CD8-positive, alpha-beta T cell (primary cell): ENCODE measurements at regions of chr3 and their contacts with region 1.

Region 1: GRCh38 chr3:4493014-4493940 is at the start of gene ITPR1:
- DNase-seq: peak; percentile 96 to 99 (median 98)
- ATAC-seq: peak; percentile 84
- H3K4me3 ChIP-seq: peak within 1 kb of the TSS; percentile 94 to 97
- H3K4me3 Mint-ChIP-seq: peak within 1 kb of the TSS; percentile 93
- H3K27ac ChIP-seq: peak within 1 kb of the TSS; percentile 70 to 75
- H3K27ac Mint-ChIP-seq: peak within 1 kb of the TSS; percentile 87
- H3K4me1 ChIP-seq: peaks cover 24% of the 10 kb centered on the region
- H3K4me1 Mint-ChIP-seq: peaks cover 48% of the 10 kb centered on the region
- H3K27me3 ChIP-seq: no peaks in the 10 kb centered on the region
- H3K27me3 Mint-ChIP-seq: no peaks in the 10 kb centered on the region
- CTCF ChIP-seq: no peak
- total RNA-seq, gene ITPR1: 57.5 to 62.3 TPM

Region 2: DNA sequence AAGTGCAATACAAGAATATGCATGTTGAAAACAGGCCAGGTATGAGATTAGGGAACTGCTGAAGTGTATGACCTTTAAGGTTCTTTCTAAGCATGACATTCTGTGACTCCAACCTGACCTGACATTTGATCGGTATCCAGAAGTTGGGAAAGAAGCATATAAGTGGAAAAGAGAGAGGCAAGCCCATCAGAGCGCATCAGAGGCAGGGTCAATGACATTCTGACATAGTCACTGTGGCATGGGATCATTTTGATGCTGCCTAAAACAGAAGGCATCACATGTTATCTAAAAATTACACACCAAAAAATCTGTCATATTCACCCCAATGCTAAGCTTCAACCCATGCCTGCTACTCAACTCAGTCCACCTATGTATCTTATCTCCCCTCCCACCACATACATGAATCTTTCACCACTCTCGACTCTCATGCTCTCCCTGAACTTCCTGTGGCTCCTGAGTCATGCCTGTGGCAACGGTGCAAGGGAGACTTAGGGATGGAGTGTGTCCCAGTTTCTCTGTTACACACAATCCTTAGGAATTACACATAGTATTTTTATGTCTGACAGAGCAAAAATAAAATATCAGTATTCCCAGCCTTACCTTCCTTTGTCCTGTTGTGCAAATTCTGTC is 714.5 kb before region 1 on chr3:
- CTCF ChIA-PET with region 1: no interaction called
- POLR2A ChIA-PET with region 1: no interaction called
- intact Hi-C with region 1: no loop called
- DNase-seq: no peak
- ATAC-seq: no peak
- H3K4me3 ChIP-seq: no peak overlapping the region
- H3K4me3 Mint-ChIP-seq: no peak overlapping the region
- H3K27ac ChIP-seq: no peak overlapping the region
- H3K27ac Mint-ChIP-seq: no peak overlapping the region
- H3K4me1 ChIP-seq: no peaks in the 10 kb centered on the region
- H3K4me1 Mint-ChIP-seq: no peaks in the 10 kb centered on the region
- H3K27me3 ChIP-seq: no peaks in the 10 kb centered on the region
- H3K27me3 Mint-ChIP-seq: no peaks in the 10 kb centered on the region
- CTCF ChIP-seq: no peak

Region 3: DNA sequence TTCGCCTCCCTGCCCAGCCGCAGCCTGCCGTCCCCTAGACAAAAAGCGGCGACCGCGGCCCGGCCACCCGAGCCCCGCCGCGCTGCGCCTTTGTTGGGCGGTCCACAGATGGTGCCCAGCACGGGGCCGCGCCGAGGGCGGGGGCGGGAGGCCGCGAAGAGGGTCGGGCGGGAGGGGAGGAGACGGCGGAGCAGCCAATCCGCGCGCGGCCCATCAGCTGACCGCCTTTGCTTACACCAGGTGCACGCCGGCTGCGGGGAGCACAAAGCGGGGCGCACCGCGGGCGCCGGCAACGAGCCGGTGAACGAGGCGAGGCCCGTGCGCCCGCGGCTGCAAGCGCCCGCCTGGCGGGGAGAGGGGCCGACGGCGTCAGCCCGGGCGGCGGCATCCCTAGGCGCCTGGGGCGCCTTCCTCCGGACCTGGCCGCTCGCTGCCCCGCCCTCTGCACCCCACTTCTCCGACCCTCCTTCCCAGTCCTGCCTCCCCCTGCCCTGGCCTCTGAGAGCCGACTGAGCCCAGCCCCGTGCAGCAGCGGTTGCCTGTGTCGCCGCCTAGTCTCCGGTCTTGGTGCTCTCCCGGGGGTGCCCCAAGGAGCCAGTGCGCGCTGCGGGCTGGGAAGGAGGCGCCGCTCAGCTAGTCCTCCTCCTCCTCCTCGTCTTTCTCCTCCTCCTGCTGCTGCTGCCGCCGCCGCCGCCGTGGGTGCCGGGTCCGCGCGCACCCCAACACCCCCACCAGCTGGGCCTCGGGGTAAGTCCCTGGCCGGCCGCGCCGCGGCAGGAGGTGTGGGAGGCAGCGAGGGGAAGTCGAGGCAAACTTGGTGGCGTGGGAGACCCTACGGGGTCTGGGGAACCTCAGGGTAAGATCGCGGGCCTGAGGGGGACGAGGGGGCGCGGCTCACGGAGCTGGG is 693.9 kb before region 1 on chr3 and contains the start of gene LRRN1:
- CTCF ChIA-PET with region 1: no interaction called
- POLR2A ChIA-PET with region 1: interaction called, 4 read pairs
- intact Hi-C with region 1: loop called in 1 of 2 experiments (anchors 10 kb)
- DNase-seq: peak; percentile 12 to 80 (median 57)
- ATAC-seq: peak; percentile 65
- H3K4me3 ChIP-seq: peak within 1 kb of the TSS; percentile 52 to 81
- H3K4me3 Mint-ChIP-seq: peak within 1 kb of the TSS; percentile 94
- H3K27ac ChIP-seq: peak within 1 kb of the TSS; percentile 62 to 76
- H3K27ac Mint-ChIP-seq: peak within 1 kb of the TSS; percentile 94
- H3K4me1 ChIP-seq: peaks cover 5% of the 10 kb centered on the region
- H3K4me1 Mint-ChIP-seq: peaks cover 25% of the 10 kb centered on the region
- H3K27me3 ChIP-seq: peaks cover 0 to 4% of the 10 kb centered on the region in 2 experiments
- H3K27me3 Mint-ChIP-seq: peaks cover 4% of the 10 kb centered on the region
- CTCF ChIP-seq: no peak
- total RNA-seq, gene LRRN1: 1.0 to 1.2 TPM

Region 4: GRCh38 chr3:4466741-4467521 is 26.3 kb before region 1 on chr3 and contains the start of gene SUMF1:
- CTCF ChIA-PET with region 1: interaction called, 4 read pairs
- POLR2A ChIA-PET with region 1: interaction called, 42 read pairs
- intact Hi-C with region 1: loop called (anchors 1 kb)
- DNase-seq: peak; percentile 34 to 85 (median 73)
- ATAC-seq: peak; percentile 93
- H3K4me3 ChIP-seq: peak within 1 kb of the TSS; percentile 75 to 76
- H3K4me3 Mint-ChIP-seq: peak within 1 kb of the TSS; percentile 91
- H3K27ac ChIP-seq: peak within 1 kb of the TSS; percentile 68 to 72
- H3K27ac Mint-ChIP-seq: peak within 1 kb of the TSS; percentile 95
- H3K4me1 ChIP-seq: peaks cover 13% of the 10 kb centered on the region
- H3K4me1 Mint-ChIP-seq: peaks cover 23% of the 10 kb centered on the region
- H3K27me3 ChIP-seq: no peaks in the 10 kb centered on the region
- H3K27me3 Mint-ChIP-seq: no peaks in the 10 kb centered on the region
- CTCF ChIP-seq: no peak
- total RNA-seq, gene SUMF1: 7.6 to 7.8 TPM

Region 5: GRCh38 chr3:4524088-4525023 is 31.1 kb after region 1 on chr3:
- CTCF ChIA-PET with region 1: interaction called, 22 read pairs
- POLR2A ChIA-PET with region 1: interaction called, 67 read pairs
- intact Hi-C with region 1: loop called (anchors 1 to 2 kb)
- DNase-seq: no peak
- ATAC-seq: no peak
- H3K4me3 ChIP-seq: no peak overlapping the region
- H3K4me3 Mint-ChIP-seq: no peak overlapping the region
- H3K27ac ChIP-seq: no peak overlapping the region
- H3K27ac Mint-ChIP-seq: no peak overlapping the region
- H3K4me1 ChIP-seq: peaks cover 5% of the 10 kb centered on the region
- H3K4me1 Mint-ChIP-seq: peaks cover 35% of the 10 kb centered on the region
- H3K27me3 ChIP-seq: no peaks in the 10 kb centered on the region
- H3K27me3 Mint-ChIP-seq: no peaks in the 10 kb centered on the region
- CTCF ChIP-seq: no peak

Region 6: GRCh38 chr3:4978204-4978965 is 485.1 kb after region 1 on chr3:
- CTCF ChIA-PET with region 1: no interaction called
- POLR2A ChIA-PET with region 1: no interaction called
- intact Hi-C with region 1: loop called in 1 of 2 experiments (anchors 5 kb)
- DNase-seq: peak; percentile 52 to 92 (median 70)
- ATAC-seq: peak; percentile 43
- H3K4me3 ChIP-seq: peak overlapping the region; percentile 71 to 97
- H3K4me3 Mint-ChIP-seq: peak overlapping the region; percentile 97
- H3K27ac ChIP-seq: peak overlapping the region; percentile 70 to 95
- H3K27ac Mint-ChIP-seq: peak overlapping the region; percentile 96
- H3K4me1 ChIP-seq: peaks cover 46% of the 10 kb centered on the region
- H3K4me1 Mint-ChIP-seq: peaks cover 47% of the 10 kb centered on the region
- H3K27me3 ChIP-seq: no peaks in the 10 kb centered on the region
- H3K27me3 Mint-ChIP-seq: no peaks in the 10 kb centered on the region
- CTCF ChIP-seq: no peak

Region 7: GRCh38 chr3:5187156-5187919 is 694.1 kb after region 1 on chr3 and contains the start of gene EDEM1:
- CTCF ChIA-PET with region 1: no interaction called
- POLR2A ChIA-PET with region 1: interaction called, 5 read pairs
- intact Hi-C with region 1: loop called (anchors 2 to 5 kb)
- DNase-seq: peak; percentile 85 to 98 (median 93)
- ATAC-seq: peak; percentile 82
- H3K4me3 ChIP-seq: peak within 1 kb of the TSS; percentile 84 to 92
- H3K4me3 Mint-ChIP-seq: peak within 1 kb of the TSS; percentile 100
- H3K27ac ChIP-seq: peak within 1 kb of the TSS; percentile 89 to 95
- H3K27ac Mint-ChIP-seq: peak within 1 kb of the TSS; percentile 100
- H3K4me1 ChIP-seq: peaks cover 27% of the 10 kb centered on the region
- H3K4me1 Mint-ChIP-seq: peaks cover 42% of the 10 kb centered on the region
- H3K27me3 ChIP-seq: no peaks in the 10 kb centered on the region
- H3K27me3 Mint-ChIP-seq: no peaks in the 10 kb centered on the region
- CTCF ChIP-seq: no peak
- total RNA-seq, gene EDEM1: 73.0 to 88.9 TPM

Region 8: GRCh38 chr3:5980475-5980874 is 1487.2 kb after region 1 on chr3:
- CTCF ChIA-PET with region 1: no interaction called
- POLR2A ChIA-PET with region 1: no interaction called
- intact Hi-C with region 1: no loop called
- DNase-seq: no peak
- ATAC-seq: no peak
- H3K4me3 ChIP-seq: no peak overlapping the region
- H3K4me3 Mint-ChIP-seq: no peak overlapping the region
- H3K27ac ChIP-seq: no peak overlapping the region
- H3K27ac Mint-ChIP-seq: no peak overlapping the region
- H3K4me1 ChIP-seq: no peaks in the 10 kb centered on the region
- H3K4me1 Mint-ChIP-seq: no peaks in the 10 kb centered on the region
- H3K27me3 ChIP-seq: no peaks in the 10 kb centered on the region
- H3K27me3 Mint-ChIP-seq: no peaks in the 10 kb centered on the region
- CTCF ChIP-seq: no peak